ENCODE measurements at regions of chr19 and their contacts with region 1.

Region 1: GRCh38 chr19:1249298-1249989 is 1.1 kb downstream of the MIDN start:
- DNase-seq: peak; percentile 98
- H3K4me3 ChIP-seq: peak overlapping the region; percentile 75 to 96 (median 86)
- H3K27ac ChIP-seq: peak overlapping the region; percentile 96 to 100 (median 100)
- H3K4me1 ChIP-seq: peaks cover 16 to 65% (median 60%) of the 10 kb centered on the region in 4 donors
- H3K27me3 ChIP-seq: no peaks in the 10 kb centered on the region
- CTCF ChIP-seq: no peak
- EP300 ChIP-seq: peak in 1 of 4 donors; percentile 49
- POLR2A ChIP-seq: peak; percentile 53 to 78

Region 2: DNA sequence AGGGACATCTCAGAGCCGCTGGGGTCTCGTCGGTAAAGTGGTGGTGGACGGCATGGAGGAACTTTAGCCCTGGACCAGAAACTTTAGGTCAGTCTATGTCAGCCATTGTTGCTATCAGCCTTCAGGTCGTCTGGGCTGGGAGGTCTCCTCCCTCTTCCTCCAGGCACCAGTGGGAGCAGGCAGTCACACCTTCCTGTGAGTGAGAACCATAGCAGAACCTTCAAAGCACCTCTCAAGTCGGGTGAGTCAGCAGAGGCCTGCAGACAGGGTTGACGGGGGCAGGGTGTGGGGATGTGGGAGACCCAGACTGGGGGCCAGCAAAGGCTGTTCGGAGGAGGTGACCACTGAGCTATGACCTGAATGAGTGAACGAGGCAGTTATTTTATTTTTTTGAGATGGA is 60.0 kb before region 1 on chr19:
- intact Hi-C with region 1: no loop called
- DNase-seq: no peak
- H3K4me3 ChIP-seq: no peak overlapping the region
- H3K27ac ChIP-seq: no peak overlapping the region
- H3K4me1 ChIP-seq: no peaks in the 10 kb centered on the region
- H3K27me3 ChIP-seq: no peaks in the 10 kb centered on the region
- CTCF ChIP-seq: no peak
- EP300 ChIP-seq: no peak
- POLR2A ChIP-seq: no peak

Region 3: GRCh38 chr19:1269065-1269477 is 19.6 kb after region 1 on chr19 and contains the start of gene CIRBP:
- intact Hi-C with region 1: loop called (anchors 1 kb)
- DNase-seq: peak; percentile 100
- H3K4me3 ChIP-seq: peak within 1 kb of the TSS; percentile 38 to 94 (median 74)
- H3K27ac ChIP-seq: peak within 1 kb of the TSS; percentile 94 to 100 (median 97)
- H3K4me1 ChIP-seq: peaks cover 0 to 84% (median 81%) of the 10 kb centered on the region in 4 donors
- H3K27me3 ChIP-seq: no peaks in the 10 kb centered on the region
- CTCF ChIP-seq: no peak
- EP300 ChIP-seq: peak in 1 of 4 donors; percentile 62
- POLR2A ChIP-seq: peak; percentile 94 to 95
- total RNA-seq, gene CIRBP: 602 to 1,004 (median 791) TPM

Region 4: GRCh38 chr19:1295169-1296012 is 45.9 kb after region 1 on chr19:
- intact Hi-C with region 1: no loop called
- DNase-seq: no peak
- H3K4me3 ChIP-seq: peak overlapping the region in 1 of 4 donors; percentile 7
- H3K27ac ChIP-seq: no peak overlapping the region
- H3K4me1 ChIP-seq: peaks cover 0 to 11% (median 8%) of the 10 kb centered on the region in 4 donors
- H3K27me3 ChIP-seq: peaks cover 9 to 61% (median 56%) of the 10 kb centered on the region in 3 donors
- CTCF ChIP-seq: no peak
- EP300 ChIP-seq: no peak
- POLR2A ChIP-seq: no peak